SK-N-SH (cell line): ENCODE measurements at regions of chr1 and their contacts with region 1.

Region 1: DNA sequence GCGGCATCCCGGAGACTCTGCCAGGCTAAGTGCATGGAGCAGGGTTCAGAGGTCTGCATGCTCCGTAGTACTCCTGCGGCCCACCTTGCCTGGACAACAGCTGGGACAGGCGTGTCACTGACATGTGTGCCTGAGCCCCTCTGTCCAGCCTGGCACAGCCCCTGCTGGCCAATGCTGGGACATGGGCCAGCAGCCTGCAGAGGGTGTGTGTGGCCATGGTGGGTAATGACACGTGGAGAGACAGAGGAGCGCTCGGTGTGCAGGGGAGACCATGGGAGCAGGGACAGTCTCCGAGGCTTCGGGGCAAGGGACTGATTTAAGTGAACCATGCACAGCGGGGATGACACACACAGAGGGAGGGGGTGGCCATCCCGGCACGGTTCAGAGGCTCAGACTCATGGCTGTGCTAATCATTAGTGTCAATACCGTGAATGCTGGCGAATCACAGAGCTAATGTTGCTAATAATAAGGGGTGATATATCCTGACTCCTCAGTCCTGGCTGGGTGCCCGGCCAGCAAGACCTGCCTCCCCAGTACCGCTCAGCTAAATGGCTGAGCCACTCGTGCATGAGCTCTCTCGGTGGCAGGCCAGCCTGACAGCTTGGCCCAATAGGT is 41.5 kb downstream of the IGSF21 start:
- DNase-seq: peak; percentile 86
- H3K4me3 ChIP-seq: no peak overlapping the region; a peak in 1 of 4 replicates
- H3K27ac ChIP-seq: peak overlapping the region in 1 of 2 experiments; percentile 62; a peak in 2 of 4 replicates
- H3K4me1 ChIP-seq: peaks cover 0 to 17% of the 10 kb centered on the region in 2 experiments; a peak in 2 of 4 replicates
- H3K27me3 ChIP-seq: no peaks in the 10 kb centered on the region
- CTCF ChIP-seq: no peak
- EP300 ChIP-seq: peak in 1 of 2 experiments; percentile 43; a peak in 1 of 4 replicates
- RAD21 ChIP-seq: peak; percentile 60

Region 2: DNA sequence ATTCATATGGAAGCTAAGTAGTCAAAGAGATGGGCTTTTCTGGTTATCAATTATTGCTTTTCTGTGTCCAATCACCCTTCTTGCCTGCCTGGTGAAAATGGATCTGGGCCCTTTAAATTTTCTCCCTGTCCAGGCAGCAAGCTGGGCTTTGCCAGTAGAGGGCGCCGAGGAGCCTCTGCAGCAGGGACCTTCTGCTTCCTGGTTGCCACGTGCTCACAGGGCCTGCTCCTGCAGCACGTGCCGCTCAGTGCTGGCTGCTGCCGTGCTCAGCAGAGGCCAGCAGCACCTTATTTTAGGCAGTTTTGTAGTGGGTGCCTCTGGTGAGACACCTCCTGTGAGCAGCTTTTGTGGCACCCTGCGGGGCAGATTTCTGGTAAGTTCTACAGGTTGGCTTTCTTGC is 390.0 kb before region 1 on chr1:
- CTCF ChIA-PET with region 1: no interaction called
- POLR2A ChIA-PET with region 1: no interaction called
- DNase-seq: no peak
- H3K4me3 ChIP-seq: no peak overlapping the region; a peak in 1 of 4 replicates
- H3K27ac ChIP-seq: no peak overlapping the region
- H3K4me1 ChIP-seq: no peaks in the 10 kb centered on the region
- H3K27me3 ChIP-seq: no peaks in the 10 kb centered on the region
- CTCF ChIP-seq: peak; percentile 37
- EP300 ChIP-seq: no peak
- RAD21 ChIP-seq: peak; percentile 6; the same call in 1 of the 2 replicates

Region 3: GRCh38 chr1:18126616-18127015 is 22.5 kb before region 1 on chr1:
- CTCF ChIA-PET with region 1: interaction called, 10 read pairs
- POLR2A ChIA-PET with region 1: no interaction called
- DNase-seq: no peak
- H3K4me3 ChIP-seq: no peak overlapping the region
- H3K27ac ChIP-seq: no peak overlapping the region
- H3K4me1 ChIP-seq: peaks cover 0 to 6% of the 10 kb centered on the region in 2 experiments; a peak in 1 of 4 replicates
- H3K27me3 ChIP-seq: no peaks in the 10 kb centered on the region
- CTCF ChIP-seq: no peak
- EP300 ChIP-seq: no peak
- RAD21 ChIP-seq: no peak

Region 4: GRCh38 chr1:18160290-18160942 is 11.3 kb after region 1 on chr1:
- CTCF ChIA-PET with region 1: interaction called, 15 read pairs
- POLR2A ChIA-PET with region 1: no interaction called
- DNase-seq: no peak
- H3K4me3 ChIP-seq: no peak overlapping the region
- H3K27ac ChIP-seq: no peak overlapping the region
- H3K4me1 ChIP-seq: peaks cover 0 to 5% of the 10 kb centered on the region in 2 experiments; a peak in 1 of 4 replicates
- H3K27me3 ChIP-seq: no peaks in the 10 kb centered on the region
- CTCF ChIP-seq: no peak
- EP300 ChIP-seq: no peak
- RAD21 ChIP-seq: no peak